Cardiac septum (tissue), 1 donor: ENCODE measurements at regions of chr16 and their contacts with region 1.

Region 1: DNA sequence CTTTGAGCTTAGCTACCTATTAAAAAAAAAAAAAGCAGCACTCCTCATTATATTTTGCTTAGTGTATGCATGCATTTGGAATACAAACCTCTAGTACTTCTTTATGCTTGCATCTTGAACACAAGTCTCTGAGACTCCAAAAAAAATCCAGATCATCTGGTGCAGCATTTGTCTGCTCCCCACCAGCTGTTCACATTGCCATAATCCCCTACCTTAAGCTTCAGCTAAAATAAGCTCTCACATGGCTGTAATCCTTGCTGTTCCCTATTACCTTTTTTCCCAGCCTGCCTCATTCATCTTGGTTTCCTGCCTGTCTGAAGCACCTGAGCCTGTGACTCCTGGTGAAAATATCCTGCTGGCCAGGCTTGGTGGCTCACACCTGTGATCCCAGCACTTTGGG is 7.5 kb upstream of the NFATC2IP start:
- DNase-seq: no peak

Region 2: DNA sequence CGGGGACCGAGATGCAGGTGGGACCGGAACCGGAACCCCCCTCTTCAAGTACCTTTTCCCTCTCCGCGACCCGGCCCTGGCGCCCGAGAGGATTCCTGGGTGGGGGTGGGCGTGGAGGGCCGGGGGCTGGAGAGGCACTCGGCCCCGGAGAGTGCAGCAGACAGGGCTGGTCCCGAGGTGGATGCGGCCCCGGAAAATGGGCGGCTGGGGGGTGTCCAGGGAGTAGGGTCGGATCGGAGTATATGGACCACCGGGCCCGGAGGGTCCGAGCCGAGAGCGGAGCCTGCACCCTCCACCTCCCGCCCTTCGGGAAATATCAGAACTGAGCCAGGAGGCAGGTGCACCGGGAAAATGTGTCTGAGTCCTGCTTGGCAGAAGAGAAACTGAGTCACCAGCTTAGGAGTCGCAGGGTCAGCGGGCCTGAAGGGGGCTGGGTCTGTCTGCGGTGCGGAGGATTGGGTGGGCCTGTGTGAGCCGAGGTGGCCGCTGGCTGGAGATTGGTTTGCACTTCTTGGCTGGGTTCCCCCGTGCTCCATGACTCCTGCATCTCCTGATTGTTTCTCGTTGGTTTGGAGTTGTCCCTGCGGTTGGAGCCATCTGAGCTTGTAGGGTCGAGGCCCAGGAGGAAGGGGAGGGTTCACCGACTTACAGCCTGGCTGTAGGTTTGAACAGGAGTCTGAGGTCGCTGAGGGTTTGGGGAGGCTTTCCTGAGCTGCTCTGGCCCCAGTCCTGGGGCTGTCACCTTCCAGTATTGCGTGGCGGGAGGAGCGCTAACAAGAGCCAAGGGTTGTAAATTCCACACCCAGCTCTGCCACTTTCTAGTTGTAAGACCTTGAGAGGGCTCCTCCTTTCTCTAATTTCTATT is 79.1 kb before region 1 on chr16:
- intact Hi-C with region 1: loop called (anchors 5 kb)
- DNase-seq: no peak

Region 3: DNA sequence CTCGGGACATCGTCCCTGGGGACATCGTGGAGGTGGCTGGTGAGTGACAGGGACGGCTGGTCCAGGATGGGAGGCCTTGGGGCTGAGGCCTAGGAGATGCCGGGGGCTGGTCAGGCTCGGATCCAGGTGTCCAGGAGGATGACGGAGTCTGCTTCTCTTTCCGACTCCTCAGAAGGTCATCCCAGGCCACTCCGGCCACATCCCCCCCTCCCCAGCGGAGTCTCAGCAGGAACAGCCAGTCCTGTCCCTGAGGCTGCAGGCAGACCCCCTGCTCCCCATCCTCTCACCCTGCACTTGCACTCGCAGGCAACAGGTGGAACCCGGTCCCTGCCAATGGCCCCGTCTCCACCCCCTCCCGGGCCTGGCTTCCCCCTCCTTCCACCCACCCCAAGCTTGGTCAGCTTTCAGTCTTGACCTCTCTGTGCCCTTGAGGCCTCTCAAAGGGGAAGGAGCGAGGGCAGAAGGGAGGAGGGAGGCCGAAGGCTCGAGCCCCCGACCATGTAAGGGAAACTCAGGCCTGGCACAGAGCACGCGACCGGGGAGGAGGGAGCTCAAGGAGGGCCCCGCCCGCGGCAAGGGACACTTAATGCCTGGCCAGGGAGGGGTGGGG is 60.6 kb before region 1 on chr16:
- intact Hi-C with region 1: no loop called
- DNase-seq: no peak